ENCODE measurements at regions of chr6 and their contacts with region 1.

Region 1: DNA sequence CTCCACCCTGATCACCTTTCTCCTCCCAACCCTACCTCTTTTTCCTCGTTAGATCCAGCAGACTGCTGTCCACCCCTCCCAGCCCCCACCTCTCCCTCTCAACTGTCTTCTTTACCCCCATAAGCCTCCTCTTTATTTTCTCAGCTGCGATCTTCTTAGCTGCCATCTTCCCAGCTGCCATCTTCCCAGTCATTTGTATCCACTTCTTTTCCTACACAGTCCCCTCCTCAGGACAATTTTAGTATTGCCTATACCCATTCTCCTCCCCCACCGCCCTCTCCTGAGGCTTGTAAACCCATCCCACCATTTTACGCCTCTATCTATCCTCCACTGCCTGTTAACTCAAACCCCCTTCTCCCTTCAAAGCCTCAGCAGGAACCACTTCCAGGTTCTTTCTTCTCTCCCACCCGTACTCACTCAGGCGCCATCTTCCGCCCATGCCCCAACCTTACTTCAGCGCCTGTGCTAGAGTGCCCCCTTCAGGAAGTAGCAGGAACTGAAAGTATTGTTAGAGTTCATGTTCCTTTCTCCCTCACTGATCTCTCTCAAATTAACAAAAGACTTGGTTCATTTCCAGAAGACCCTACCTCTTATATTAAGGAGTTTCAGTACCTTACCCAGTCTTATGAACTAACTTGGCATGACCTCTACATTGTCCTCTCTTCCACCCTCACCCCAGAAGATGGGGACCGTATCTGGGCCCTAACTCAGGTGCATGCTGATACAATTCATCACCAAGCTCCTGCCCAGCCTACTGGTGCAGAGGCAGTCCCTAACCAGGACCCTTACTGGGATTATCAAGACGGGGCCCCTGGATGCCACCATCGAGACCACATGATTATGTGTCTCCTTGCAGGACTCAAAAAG is 236.0 kb downstream of the ADGRG6 start:
- DNase-seq: peak; percentile 40
- H3K4me3 Mint-ChIP-seq: no peak overlapping the region
- H3K27ac Mint-ChIP-seq: no peak overlapping the region
- H3K4me1 Mint-ChIP-seq: no peaks in the 10 kb centered on the region
- H3K27me3 Mint-ChIP-seq: no peaks in the 10 kb centered on the region

Region 2: DNA sequence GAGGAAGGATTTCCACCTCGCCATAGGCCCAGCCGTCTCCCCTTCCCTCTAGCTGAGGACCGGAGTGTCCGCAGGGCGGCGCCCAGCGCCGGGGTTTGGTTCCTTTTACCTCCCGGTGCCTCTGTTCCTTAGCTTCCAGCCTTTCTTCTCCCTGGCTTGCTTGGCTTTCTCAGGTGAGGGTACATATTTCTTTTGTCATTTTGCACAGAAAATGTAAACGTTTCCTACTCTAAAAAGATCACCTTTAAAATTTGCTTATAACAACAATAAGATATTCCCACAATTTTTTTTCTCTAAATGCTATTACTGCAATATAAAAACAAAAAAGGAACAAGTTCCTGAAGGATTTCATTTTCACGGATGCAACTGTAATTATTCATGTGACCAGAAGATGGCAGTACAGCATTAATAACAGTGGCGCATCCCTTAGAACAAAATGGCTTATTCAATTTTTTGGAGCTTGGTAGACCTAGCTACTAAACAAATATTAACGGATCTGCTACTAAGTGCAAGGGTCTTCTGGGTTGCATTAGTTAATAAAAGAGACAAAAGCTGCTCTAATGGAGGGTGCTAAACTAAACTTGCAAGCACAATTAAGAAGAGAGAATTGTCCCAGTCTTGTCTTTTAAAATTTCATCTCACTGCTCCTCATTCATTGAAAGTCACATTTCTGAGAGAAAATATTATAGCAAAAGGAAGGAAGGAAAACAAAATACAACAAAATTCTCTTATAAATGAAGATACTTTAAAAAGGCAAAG is 63.1 kb before region 1 on chr6:
- CTCF ChIA-PET with region 1: interaction called, 10 read pairs
- POLR2A ChIA-PET with region 1: no interaction called
- intact Hi-C with region 1: loop called (anchors 2 kb)
- DNase-seq: no peak
- H3K4me3 Mint-ChIP-seq: no peak overlapping the region
- H3K27ac Mint-ChIP-seq: no peak overlapping the region
- H3K4me1 Mint-ChIP-seq: no peaks in the 10 kb centered on the region
- H3K27me3 Mint-ChIP-seq: peaks cover 2% of the 10 kb centered on the region

Measured in activated CD4-positive, alpha-beta memory T cell treated with anti-CD3 and anti-CD28 coated beads for 36 hours (primary cell).